Cardiac septum (tissue), 1 donor: ENCODE measurements at regions of chr11 and their contacts with region 1.

Region 1: DNA sequence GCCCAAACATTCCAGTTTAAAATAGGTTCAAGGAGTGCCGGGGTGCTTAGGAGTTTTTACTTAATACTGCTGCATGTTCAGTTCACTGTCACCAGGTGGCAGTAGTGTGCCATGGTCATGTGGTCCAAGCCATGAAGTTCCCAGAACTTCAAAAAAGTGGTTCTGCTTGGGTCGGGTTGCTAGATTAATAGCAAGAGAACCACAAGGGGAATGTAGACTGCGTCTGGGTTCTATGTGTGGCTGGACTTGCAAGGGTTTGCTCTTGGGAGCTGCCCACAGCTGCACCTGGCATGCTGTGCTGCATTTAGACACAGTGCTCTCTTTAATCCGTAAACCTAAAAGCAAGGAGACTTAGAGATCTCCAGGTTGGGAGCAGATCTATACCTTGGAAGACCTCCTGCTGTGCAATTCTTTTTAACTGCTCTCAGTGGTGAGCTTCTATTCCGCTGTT is 6.5 kb upstream of the SPON1 start:
- DNase-seq: peak; percentile 77

Region 2: GRCh38 chr11:14044916-14045315 is 88.9 kb after region 1 on chr11:
- intact Hi-C with region 1: loop called (anchors 5 kb)
- DNase-seq: no peak

Region 3: DNA sequence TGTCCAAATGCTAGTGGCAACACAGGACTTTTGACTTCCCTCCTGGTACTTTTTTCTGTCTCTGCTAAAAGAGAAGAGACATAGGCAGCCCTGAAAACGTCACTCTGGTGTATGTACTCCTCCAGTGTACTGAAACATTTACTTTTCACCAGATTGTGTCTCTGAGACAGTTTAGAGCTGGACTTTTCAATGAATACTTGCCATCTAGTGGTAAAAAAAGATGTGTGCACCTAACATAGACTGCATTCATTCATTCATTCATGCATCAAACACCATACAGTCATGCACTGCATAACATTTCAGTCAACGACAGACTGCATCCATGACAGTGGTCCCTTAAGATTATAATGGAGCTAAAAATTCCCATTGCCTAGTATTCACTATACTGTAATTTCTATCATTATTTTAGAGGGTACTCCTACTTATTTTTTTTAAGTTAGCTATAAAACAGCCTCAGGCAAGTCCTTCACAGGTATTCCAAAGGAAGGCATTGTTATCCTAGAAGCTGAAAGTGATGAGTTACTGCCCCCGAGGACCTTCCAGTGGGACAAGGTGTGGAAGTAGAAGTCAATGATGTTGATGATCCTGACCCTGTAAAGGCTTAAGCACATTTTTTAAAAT is 192.8 kb after region 1 on chr11:
- intact Hi-C with region 1: loop called (anchors 2 kb)
- DNase-seq: no peak